Aorta (tissue), 5 donors: ENCODE measurements at regions of chr2 and their contacts with region 1.

Region 1: DNA sequence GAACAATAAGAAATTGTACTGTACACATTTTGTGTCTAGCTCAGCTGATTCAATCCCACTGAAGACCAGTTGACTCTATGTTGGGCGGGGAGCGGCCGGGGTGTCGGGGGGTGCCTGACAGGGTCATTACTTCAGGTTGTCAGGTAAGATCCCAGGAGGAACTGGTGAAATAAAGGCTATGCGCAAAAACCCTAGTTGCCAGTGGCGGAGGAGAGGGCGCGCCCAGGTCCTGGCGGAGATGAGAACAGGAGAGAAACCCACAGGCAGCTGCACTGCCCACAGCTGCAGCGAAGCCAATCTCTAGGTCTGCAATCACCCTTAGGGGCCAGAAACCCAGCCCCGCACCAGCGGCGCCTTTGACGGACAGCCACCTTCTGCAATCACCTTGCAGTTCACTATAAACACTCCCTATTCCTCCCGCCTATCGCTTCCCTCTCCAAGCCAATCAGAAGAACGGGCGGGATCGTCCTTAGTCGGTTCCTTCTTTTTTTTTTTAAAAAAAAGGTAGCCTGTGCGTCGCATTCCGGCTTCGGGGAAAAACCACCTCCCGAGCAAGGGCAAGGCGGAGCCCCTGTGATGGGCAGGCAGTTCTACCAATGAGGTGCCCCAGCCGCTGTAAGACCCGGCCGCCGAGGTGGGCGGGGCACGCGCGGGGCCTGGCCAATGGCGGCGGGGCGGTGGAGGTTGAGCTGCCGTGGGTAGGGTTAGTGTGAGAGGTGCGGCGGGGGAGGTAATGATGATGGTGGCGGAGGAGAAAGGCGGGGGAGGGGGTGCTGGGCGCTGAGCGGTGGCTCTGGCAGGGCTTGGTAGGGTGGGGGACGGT is at the start of gene EHBP1:
- DNase-seq: peak; percentile 99
- ATAC-seq: peak; percentile 99
- H3K4me3 ChIP-seq: peak within 1 kb of the TSS; percentile 75 to 79
- H3K27ac ChIP-seq: peak within 1 kb of the TSS; percentile 3 to 66
- H3K4me1 ChIP-seq: peaks cover 0 to 7% of the 10 kb centered on the region in 2 donors
- H3K27me3 ChIP-seq: no peaks in the 10 kb centered on the region
- total RNA-seq, gene EHBP1: 42.7 to 70.9 TPM

Region 2: DNA sequence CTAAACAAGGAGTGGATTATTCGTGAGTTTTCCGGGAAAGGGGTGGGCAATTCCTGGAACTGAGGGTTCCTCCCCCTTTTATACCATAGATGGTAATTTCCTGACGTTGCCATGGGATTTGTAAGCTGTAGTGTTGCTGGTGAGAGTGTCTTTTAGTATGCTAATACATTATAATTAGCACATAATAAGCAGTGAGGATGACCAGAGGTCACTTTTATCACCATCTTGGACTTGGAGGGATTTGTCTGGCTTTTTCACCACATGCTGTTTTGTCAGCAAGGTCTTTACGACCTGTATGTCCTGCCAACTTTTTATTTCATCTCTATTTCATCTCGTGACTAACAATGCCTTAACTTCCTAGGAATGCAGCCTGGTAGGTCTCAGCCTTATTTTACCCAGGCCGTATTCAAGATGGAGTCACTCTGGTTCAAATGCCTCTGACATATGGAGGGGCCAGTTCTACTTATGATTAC is 634.1 kb before region 1 on chr2:
- intact Hi-C with region 1: no loop called
- DNase-seq: no peak
- ATAC-seq: no peak
- H3K4me3 ChIP-seq: no peak overlapping the region
- H3K27ac ChIP-seq: no peak overlapping the region
- H3K4me1 ChIP-seq: no peaks in the 10 kb centered on the region
- H3K27me3 ChIP-seq: no peaks in the 10 kb centered on the region

Region 3: DNA sequence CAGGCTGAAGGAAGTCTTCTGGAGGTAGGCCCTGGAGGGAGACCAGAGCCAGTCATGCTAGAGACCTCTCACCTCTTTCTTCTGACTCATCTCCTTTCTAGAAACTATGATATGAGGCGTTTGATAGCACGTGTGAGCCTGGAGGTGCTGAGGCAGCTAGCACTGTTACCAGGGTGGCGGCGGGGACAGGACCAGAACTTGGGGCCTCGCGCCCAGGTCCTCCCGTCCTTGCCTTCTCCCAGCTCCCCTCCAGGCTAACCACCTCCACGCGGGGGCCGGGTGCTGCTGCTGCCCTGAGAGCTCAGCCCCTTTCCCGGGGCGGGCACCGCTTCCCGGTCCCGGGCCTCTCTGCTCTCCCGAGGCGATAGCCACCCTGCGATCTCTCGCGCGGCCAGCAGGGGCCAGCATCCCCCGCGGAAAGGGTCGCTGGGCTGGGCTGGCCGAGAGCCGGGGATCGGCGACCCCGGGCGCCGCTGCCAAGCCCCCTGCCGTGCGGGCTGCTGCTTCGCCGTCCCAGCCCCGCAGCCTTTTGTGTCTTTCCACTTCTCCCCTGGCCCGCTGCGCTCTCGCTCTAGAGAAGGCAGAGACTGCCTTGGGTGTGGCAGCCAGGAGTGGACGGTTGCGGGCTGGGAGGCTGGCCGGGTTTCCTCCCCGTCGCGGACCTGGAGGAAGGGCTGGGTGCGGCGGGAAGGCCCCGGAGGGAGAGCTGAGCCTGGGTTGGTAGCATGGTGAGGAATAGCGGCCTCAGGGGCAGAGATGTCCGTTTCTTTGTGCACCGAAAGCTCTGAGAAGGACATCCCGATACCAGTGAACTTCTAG is 248.3 kb before region 1 on chr2:
- intact Hi-C with region 1: loop called in 1 of 2 experiments (anchors 5 kb)
- DNase-seq: peak; percentile 77 to 93
- ATAC-seq: peak; percentile 95
- H3K4me3 ChIP-seq: peak overlapping the region; percentile 12 to 50
- H3K27ac ChIP-seq: no peak overlapping the region
- H3K4me1 ChIP-seq: no peaks in the 10 kb centered on the region
- H3K27me3 ChIP-seq: no peaks in the 10 kb centered on the region

Region 4: GRCh38 chr2:62505750-62506420 is 199.3 kb before region 1 on chr2 and contains the start of gene TMEM17:
- intact Hi-C with region 1: loop called (anchors 1 to 10 kb)
- DNase-seq: peak; percentile 95 to 97
- ATAC-seq: peak; percentile 98
- H3K4me3 ChIP-seq: peak within 1 kb of the TSS; percentile 53 to 55
- H3K27ac ChIP-seq: peak within 1 kb of the TSS; percentile 68 to 71
- H3K4me1 ChIP-seq: no peaks in the 10 kb centered on the region
- H3K27me3 ChIP-seq: no peaks in the 10 kb centered on the region
- total RNA-seq, gene TMEM17: 1.1 TPM

Region 5: GRCh38 chr2:62586981-62587380 is 118.2 kb before region 1 on chr2:
- intact Hi-C with region 1: no loop called
- DNase-seq: no peak
- ATAC-seq: no peak
- H3K4me3 ChIP-seq: no peak overlapping the region
- H3K27ac ChIP-seq: no peak overlapping the region
- H3K4me1 ChIP-seq: no peaks in the 10 kb centered on the region
- H3K27me3 ChIP-seq: no peaks in the 10 kb centered on the region

Region 6: DNA sequence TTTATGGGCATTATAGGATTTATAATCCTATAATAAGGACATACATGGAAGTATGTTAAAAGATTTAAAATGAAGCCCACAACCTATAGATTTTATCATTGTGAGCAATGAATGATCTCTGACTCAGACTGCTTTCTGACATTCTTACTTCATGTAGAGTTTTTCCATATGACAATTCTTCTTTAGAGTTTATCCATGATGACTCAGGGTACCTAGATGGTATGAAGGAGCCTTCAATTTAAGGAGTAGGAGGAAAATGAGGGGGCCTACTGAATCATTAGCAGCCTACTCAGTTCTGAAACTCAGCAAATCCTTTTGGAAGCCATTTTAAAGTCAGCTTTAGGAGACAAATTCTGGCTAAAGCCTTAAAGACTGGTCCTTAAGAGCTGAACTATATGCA is 1428.6 kb after region 1 on chr2:
- intact Hi-C with region 1: no loop called
- DNase-seq: no peak
- ATAC-seq: no peak
- H3K4me3 ChIP-seq: no peak overlapping the region
- H3K27ac ChIP-seq: no peak overlapping the region
- H3K4me1 ChIP-seq: no peaks in the 10 kb centered on the region
- H3K27me3 ChIP-seq: no peaks in the 10 kb centered on the region